Aorta (tissue), 5 donors: ENCODE measurements at regions of chr6 and their contacts with region 1.

Region 1: GRCh38 chr6:124870611-124871459 is 91.4 kb upstream of the RNF217 start:
- DNase-seq: no peak
- ATAC-seq: peak; percentile 63
- H3K4me3 ChIP-seq: no peak overlapping the region
- H3K27ac ChIP-seq: no peak overlapping the region
- H3K4me1 ChIP-seq: no peaks in the 10 kb centered on the region
- H3K27me3 ChIP-seq: no peaks in the 10 kb centered on the region

Region 2: GRCh38 chr6:124949706-124950105 is 78.9 kb after region 1 on chr6:
- intact Hi-C with region 1: loop called in 1 of 2 experiments (anchors 5 kb)
- DNase-seq: no peak
- ATAC-seq: no peak
- H3K4me3 ChIP-seq: no peak overlapping the region
- H3K27ac ChIP-seq: no peak overlapping the region
- H3K4me1 ChIP-seq: no peaks in the 10 kb centered on the region
- H3K27me3 ChIP-seq: no peaks in the 10 kb centered on the region

Region 3: DNA sequence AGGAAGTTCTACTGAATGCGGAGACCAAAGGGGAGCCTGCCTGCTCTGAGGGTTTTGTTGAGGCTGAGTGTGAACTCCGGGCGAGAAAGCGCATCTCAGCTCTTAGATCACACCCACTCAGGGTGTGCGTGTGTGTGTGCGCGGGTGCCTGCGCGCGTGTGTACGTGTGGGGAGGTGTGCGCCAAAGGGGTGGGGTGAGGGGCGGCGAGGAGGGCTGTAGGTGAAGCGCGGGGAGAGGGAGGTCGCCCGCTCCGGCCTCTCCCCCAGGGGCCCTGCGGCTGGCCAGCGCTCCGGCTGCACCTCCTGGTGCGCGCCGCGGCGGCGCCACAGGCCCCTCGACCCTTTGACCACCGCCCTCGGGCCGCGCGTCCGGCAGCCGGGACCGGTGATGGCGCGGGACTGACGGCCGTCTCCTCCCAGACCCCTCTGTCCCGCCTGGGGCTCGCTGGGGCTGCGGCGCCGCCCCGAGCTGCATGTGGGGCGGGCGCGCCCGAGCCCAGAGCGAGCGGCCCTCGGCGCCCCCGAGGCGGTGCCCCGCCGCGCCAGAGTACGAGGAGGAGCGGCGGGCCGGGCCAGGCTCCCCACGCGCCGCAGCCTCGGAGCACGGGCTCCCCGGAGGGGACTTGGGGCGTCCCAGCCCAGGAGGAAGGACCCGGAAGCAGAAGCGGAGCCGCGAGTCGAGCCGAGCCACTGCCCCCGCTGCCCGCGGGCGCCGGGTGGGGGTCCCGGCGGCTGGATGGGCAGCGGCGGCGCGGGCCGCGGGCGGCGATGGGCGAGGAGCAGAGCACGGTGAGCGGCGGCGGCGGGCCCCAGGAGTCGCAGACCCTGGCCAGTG is 91.2 kb after region 1 on chr6 and contains the start of gene RNF217:
- intact Hi-C with region 1: loop called in 1 of 2 experiments (anchors 5 kb)
- DNase-seq: peak; percentile 88 to 89
- ATAC-seq: peak; percentile 89
- H3K4me3 ChIP-seq: peak within 1 kb of the TSS; percentile 95 to 99
- H3K27ac ChIP-seq: peak within 1 kb of the TSS; percentile 96 to 99
- H3K4me1 ChIP-seq: no peaks in the 10 kb centered on the region
- H3K27me3 ChIP-seq: no peaks in the 10 kb centered on the region
- total RNA-seq, gene RNF217: 52.6 to 79.5 TPM

Region 4: DNA sequence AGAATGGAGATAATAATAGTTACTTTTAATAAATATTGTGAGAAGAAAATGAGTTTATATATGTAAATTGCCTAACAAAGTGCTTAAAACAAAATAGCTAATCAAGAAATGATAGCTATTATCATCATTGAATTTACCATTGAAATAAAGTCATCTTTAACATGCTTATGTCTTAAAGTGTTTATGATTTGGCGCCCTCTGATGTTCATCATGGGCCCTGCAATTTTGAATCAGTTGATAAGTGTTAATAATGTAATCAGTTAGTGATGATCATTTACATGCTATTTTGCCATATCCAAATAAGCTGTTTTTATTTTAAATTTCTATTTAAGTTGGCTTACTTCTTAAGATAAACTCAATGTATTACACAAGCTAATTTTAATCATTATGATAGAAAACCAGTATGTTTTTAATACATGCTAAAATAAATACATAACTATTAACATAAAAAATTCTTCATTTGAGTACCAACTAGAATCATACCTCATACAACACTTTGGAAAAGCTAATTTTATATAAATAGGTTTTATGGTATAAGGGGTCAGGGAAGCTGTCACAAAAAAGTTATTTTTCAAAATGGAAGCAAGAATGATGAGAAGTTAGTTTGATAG is 243.5 kb after region 1 on chr6:
- intact Hi-C with region 1: loop called (anchors 1 to 2 kb)
- DNase-seq: no peak
- ATAC-seq: no peak
- H3K4me3 ChIP-seq: no peak overlapping the region
- H3K27ac ChIP-seq: no peak overlapping the region
- H3K4me1 ChIP-seq: no peaks in the 10 kb centered on the region
- H3K27me3 ChIP-seq: no peaks in the 10 kb centered on the region

Region 5: DNA sequence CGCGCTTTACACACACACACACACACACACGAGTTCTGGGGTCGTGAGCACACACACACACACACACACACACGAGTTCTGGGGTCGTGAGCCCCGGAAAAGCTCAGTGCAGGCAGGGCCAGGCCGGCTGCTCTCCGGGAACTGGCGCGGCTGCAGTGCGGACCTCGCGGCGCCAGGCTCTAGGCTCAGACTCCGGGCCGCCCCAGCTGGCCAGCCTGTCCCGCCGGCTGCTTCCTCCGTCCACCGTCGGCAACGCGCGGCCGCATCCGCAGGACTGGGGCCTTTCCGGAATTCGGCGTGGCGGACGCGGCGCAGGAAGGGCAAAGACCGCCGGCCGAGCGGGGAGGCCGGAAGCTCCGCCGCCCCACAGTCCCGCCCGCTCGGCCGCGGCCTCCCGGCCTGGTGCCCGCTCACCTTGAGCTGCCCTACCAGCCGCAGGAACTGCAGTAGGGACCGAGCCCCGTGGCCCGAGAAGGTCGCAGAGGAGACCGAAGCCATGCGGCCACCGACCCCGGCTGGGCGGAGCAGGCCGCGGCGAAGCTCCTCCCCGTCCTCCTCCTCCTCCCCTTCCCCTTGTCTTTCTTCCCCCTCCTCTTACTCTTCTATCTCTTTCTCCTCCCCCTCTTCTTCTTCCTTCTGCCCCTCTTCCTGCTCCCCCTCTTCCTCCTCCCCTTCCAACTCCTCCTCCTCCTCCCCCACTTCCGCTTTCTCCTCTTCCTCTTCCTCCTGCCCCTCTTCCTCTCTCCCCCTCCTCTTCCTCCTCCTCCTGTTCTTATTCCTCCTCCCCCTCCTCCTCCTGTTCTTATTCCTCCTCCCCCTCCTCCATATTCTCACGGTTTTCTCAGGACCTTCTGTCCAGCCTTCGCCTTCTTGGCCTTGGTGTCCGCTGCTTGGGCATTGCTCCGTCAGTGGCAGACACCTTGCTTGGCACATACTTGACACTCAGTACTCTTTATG is 430.9 kb after region 1 on chr6 and contains the start of gene HDDC2:
- intact Hi-C with region 1: loop called in 1 of 2 experiments (anchors 10 kb)
- DNase-seq: peak; percentile 89 to 93
- ATAC-seq: peak; percentile 92
- H3K4me3 ChIP-seq: peak within 1 kb of the TSS; percentile 51 to 73
- H3K27ac ChIP-seq: peak within 1 kb of the TSS; percentile 61 to 92
- H3K4me1 ChIP-seq: no peaks in the 10 kb centered on the region
- H3K27me3 ChIP-seq: no peaks in the 10 kb centered on the region
- total RNA-seq, gene HDDC2: 48.0 to 60.9 TPM